GM23248 (cell line): ENCODE measurements at regions of chr14 and their contacts with region 1.

Region 1: GRCh38 chr14:96100161-96101029 is 61.2 kb downstream of the C14orf132 start:
- DNase-seq: peak; percentile 86
- H3K4me3 ChIP-seq: no peak overlapping the region
- H3K27ac ChIP-seq: no peak overlapping the region
- H3K4me1 ChIP-seq: peaks cover 17% of the 10 kb centered on the region
- H3K27me3 ChIP-seq: no peaks in the 10 kb centered on the region

Region 2: GRCh38 chr14:95515596-95516552 is 584.5 kb before region 1 on chr14:
- in situ Hi-C with region 1: no loop called
- DNase-seq: peak; percentile 73
- H3K4me3 ChIP-seq: peak overlapping the region; percentile 75
- H3K27ac ChIP-seq: no peak overlapping the region
- H3K4me1 ChIP-seq: peaks cover 47% of the 10 kb centered on the region
- H3K27me3 ChIP-seq: no peaks in the 10 kb centered on the region

Region 3: DNA sequence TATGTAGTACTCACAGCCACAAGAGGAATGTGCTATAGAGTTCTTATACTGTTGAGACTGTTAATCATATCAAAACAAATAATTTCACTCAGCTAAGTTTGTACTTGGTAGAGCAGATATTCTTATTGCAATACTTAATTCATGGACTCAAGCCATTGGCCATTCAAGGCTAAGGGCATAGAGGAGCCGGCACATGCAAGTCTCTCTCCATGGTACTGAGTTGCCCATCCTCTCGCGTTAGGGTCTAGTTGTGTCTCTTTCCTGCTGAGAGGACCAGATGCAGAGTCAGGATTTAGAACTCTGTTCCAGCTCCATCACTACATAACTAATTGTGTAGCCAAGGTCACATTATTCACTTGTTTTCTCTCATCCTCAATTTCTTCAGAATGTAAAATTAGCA is 238.2 kb before region 1 on chr14:
- in situ Hi-C with region 1: no loop called
- DNase-seq: peak; percentile 21
- H3K4me3 ChIP-seq: no peak overlapping the region
- H3K27ac ChIP-seq: no peak overlapping the region
- H3K4me1 ChIP-seq: no peaks in the 10 kb centered on the region
- H3K27me3 ChIP-seq: no peaks in the 10 kb centered on the region; the same call in 1 of the 2 replicates

Region 4: GRCh38 chr14:96001866-96002497 is 98.4 kb before region 1 on chr14:
- in situ Hi-C with region 1: loop called (anchors 5 kb)
- DNase-seq: peak; percentile 61
- H3K4me3 ChIP-seq: no peak overlapping the region
- H3K27ac ChIP-seq: no peak overlapping the region
- H3K4me1 ChIP-seq: no peaks in the 10 kb centered on the region
- H3K27me3 ChIP-seq: peaks cover 23% of the 10 kb centered on the region

Region 5: DNA sequence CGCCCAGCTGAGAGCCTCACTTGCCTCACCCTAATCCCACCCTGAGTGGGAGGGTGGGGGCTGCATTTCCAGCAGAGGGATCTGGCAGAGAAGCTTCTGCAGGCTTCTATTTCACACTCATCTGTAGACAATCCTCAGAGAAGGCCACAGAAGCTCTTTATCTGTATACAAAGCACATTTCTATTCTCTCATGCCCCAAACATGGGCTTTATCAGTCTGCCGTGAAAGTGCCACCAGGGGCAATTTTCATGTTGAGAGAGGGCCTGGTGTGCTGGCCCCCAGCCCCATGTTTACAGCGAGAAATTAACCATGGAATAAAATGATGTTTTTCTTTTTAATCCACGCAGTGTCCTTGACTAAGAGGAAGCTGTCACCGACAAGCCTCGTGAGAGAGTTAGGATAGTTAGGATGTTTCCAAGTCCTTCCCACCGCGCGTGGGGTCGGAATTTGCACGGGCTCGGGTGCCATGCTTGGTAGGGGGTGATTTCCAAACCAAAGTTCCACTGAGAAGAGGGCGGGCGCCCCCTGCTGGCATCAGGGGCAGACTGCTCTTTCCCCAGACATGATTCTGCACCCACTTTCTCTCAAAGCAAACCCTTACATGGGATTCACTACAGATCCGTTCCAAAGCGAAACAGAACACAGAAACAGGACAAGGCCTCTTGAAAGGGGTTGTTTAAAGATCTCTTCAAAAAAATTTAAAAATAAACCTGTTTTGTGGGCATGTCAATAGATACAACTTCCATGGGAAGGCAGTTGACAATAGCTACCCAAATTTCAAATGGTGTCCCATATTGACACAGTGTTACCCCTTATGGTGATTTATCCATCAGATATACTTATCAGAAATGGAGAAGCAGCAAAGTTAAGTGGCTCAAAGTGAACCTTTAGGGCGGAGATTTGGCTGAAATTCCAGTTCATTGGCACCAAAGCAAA is 175.1 kb after region 1 on chr14:
- in situ Hi-C with region 1: loop called (anchors 5 kb)
- DNase-seq: peak; percentile 83
- H3K4me3 ChIP-seq: no peak overlapping the region
- H3K27ac ChIP-seq: peak overlapping the region; percentile 77
- H3K4me1 ChIP-seq: peaks cover 25% of the 10 kb centered on the region
- H3K27me3 ChIP-seq: no peaks in the 10 kb centered on the region

Region 6: GRCh38 chr14:96409701-96410100 is 309.3 kb after region 1 on chr14:
- in situ Hi-C with region 1: loop called (anchors 10 kb)
- DNase-seq: no peak
- H3K4me3 ChIP-seq: no peak overlapping the region
- H3K27ac ChIP-seq: no peak overlapping the region
- H3K4me1 ChIP-seq: no peaks in the 10 kb centered on the region
- H3K27me3 ChIP-seq: no peaks in the 10 kb centered on the region; the same call in 1 of the 2 replicates